K562 (cell line): ENCODE measurements at regions of chr5 and their contacts with region 1.

Region 1: DNA sequence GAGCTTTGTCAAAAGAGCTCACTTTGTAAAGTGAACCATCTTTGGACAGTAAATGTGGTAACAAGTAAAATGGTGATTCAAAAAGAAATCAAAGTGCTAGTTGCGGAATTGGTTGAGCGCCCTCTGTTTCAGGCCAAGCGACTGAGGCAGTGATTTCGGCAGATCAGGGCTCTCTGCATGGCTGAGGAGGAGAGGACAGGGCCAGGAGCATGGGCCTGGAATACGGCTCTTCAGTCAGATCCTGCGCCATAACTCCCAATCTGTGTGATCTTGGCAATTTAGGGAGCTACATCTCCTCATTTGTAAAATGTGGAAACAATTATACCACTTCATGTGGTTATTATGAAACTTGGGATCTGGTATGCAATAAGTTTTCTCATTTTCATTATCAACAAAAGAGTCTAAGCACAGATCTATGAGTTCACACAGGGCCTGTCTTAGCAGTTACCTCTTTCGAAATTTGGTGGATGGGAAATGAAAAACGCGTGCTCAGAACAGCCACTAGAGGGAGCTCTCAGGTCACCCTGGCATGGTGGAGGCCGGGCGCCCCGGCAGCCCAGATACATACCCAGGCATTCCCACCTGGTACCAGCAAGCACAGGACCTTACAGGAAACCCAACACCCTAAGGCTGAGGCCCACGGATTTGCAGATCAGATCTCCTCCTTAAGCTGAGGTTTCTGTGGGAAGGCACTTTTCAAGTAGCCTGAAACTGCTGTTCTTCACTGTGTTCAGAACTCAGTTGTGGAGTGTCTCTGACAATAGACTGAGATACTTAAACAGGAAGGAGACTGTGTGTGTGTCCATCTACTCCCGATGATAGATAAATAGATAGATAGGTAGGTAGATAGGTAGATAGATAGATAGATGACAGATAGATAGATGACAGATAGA is 303.7 kb downstream of the RAB3C start:
- DNase-seq: peak; percentile 48 to 72 (median 66)
- ATAC-seq: peak; percentile 83
- H3K4me3 ChIP-seq: no peak overlapping the region
- H3K27ac ChIP-seq: no peak overlapping the region
- H3K4me1 ChIP-seq: no peaks in the 10 kb centered on the region
- H3K27me3 ChIP-seq: peaks cover 0 to 5% of the 10 kb centered on the region in 2 experiments; a peak in 1 of 5 replicates
- CTCF ChIP-seq: peak; percentile 63 to 84 (median 83)
- EP300 ChIP-seq: no peak
- POLR2A ChIP-seq: no peak
- RAD21 ChIP-seq: peak in 1 of 2 experiments; percentile 59; a peak in 3 of 4 replicates

Region 2: GRCh38 chr5:59007460-59008063 is 121.0 kb after region 1 on chr5:
- CTCF ChIA-PET with region 1: interaction called, 11 read pairs
- POLR2A ChIA-PET with region 1: interaction called, 3 read pairs
- in situ Hi-C with region 1: no loop called
- intact Hi-C with region 1: loop called (anchors 2 kb)
- DNase-seq: peak in 2 of 4 experiments; percentile 5 to 8
- ATAC-seq: no peak
- H3K4me3 ChIP-seq: no peak overlapping the region
- H3K27ac ChIP-seq: no peak overlapping the region
- H3K4me1 ChIP-seq: no peaks in the 10 kb centered on the region
- H3K27me3 ChIP-seq: no peaks in the 10 kb centered on the region
- CTCF ChIP-seq: peak in 1 of 3 experiments; percentile 59; a peak in 2 of 6 replicates
- EP300 ChIP-seq: no peak
- POLR2A ChIP-seq: no peak
- RAD21 ChIP-seq: peak; percentile 43 to 54; a peak in 3 of 4 replicates

Region 3: DNA sequence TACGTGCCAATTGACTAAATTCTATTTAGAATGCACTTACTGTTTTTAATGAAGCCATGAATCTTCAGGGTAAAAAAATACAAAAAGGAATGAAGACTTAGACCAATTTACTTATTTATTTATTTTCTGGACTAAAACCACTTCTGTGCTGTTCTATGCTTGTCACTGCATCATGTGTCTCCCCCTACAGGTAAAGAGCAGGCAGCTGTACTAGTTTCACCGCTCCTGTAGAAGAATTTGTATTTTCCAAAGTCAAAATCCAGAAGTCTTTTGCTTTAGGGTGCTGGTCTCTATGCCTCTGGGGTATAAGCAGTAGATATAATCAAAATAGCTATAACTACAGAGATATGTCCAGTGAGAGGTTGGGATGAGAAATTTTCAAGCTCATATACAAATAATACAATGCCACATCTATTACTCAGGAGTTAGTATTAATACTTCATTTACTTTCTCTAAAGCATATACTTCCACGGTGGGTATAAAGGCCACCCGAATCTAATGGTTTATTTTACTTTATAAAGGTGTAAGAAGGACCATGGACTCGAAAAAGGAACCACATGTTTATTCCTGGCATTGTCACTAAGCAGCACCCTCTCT is 287.8 kb after region 1 on chr5:
- CTCF ChIA-PET with region 1: interaction called, 11 read pairs
- POLR2A ChIA-PET with region 1: no interaction called
- in situ Hi-C with region 1: no loop called
- intact Hi-C with region 1: loop called (anchors 2 kb)
- DNase-seq: peak in 2 of 4 experiments; percentile 20 to 44
- ATAC-seq: peak; percentile 82
- H3K4me3 ChIP-seq: no peak overlapping the region
- H3K27ac ChIP-seq: no peak overlapping the region
- H3K4me1 ChIP-seq: no peaks in the 10 kb centered on the region
- H3K27me3 ChIP-seq: no peaks in the 10 kb centered on the region
- CTCF ChIP-seq: peak; percentile 48 to 70 (median 60)
- EP300 ChIP-seq: no peak
- POLR2A ChIP-seq: no peak
- RAD21 ChIP-seq: peak; percentile 52 to 54

Region 4: DNA sequence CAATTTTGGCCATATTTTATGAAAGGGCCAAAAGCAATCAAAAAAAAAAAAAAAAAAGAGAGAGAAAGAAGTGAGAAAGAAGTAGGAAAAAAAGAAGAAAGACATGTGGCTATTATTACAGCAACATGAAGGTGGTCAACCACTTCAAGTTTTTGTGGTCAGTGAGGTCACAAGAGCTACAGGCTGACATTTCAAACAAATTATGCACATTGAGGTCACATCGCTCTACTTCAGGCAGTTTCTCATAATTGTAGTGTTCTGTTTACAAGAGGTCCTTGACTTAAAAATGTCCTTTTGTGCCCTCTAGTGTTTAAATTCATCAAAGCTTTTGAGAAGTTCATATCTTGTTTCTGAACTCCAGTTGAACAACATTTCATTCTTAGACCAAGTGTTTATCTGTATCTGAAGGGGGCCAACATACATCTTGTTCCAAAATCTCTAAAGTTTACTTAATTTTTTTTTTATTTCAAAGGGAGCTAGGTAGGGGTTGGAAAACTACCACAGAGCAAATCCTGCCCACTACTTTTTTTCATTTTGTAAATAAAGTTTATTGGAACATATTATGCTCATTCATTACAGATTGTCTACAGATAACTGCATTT is 493.9 kb after region 1 on chr5:
- CTCF ChIA-PET with region 1: no interaction called
- POLR2A ChIA-PET with region 1: no interaction called
- in situ Hi-C with region 1: no loop called
- intact Hi-C with region 1: loop called (anchors 10 kb)
- DNase-seq: peak in 2 of 4 experiments; percentile 7 to 13
- ATAC-seq: no peak; the same call in 2 of the 3 replicates
- H3K4me3 ChIP-seq: no peak overlapping the region
- H3K27ac ChIP-seq: no peak overlapping the region
- H3K4me1 ChIP-seq: no peaks in the 10 kb centered on the region
- H3K27me3 ChIP-seq: no peaks in the 10 kb centered on the region
- CTCF ChIP-seq: peak in 1 of 3 experiments; percentile 32; a peak in 2 of 6 replicates
- EP300 ChIP-seq: no peak
- POLR2A ChIP-seq: no peak
- RAD21 ChIP-seq: peak in 1 of 2 experiments; percentile 46; a peak in 3 of 4 replicates

Region 5: DNA sequence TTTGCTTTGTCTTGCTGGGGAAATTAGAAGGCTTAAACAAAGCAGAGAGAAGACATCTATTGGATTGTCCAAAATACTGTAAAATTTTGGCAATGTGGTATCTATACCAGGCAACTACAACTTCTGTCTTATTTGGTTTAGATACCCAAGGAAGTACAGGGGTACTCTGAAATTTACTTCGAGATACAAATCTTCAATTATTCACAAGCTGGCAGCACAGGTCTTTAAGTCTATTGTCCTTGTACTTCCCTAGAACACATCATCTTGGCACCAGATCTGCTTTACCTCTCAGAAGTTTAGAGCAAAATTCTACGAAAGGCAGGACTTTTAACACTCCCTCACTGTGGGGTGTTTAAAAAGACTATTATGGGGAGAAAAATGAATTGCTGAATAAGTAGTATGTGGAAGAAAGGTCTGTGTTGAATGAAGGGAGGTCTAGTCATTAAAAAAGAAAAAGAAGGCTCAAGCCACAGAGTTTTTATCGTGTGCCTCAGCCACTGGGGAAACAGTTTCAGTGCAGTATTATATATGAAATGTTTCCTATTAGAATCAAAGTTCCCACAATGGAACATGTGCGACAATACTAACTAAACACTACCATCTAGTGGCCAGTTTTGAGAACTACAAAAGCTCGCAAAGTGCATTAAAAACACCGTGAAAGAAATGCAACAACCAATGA is 913.2 kb after region 1 on chr5:
- CTCF ChIA-PET with region 1: no interaction called
- POLR2A ChIA-PET with region 1: no interaction called
- in situ Hi-C with region 1: loop called (anchors 25 kb)
- intact Hi-C with region 1: loop called (anchors 10 kb)
- DNase-seq: peak; percentile 22 to 50 (median 24)
- ATAC-seq: peak; percentile 76
- H3K4me3 ChIP-seq: no peak overlapping the region
- H3K27ac ChIP-seq: no peak overlapping the region
- H3K4me1 ChIP-seq: no peaks in the 10 kb centered on the region
- H3K27me3 ChIP-seq: no peaks in the 10 kb centered on the region
- CTCF ChIP-seq: peak; percentile 42 to 78 (median 51); a peak in 4 of 6 replicates
- EP300 ChIP-seq: no peak
- POLR2A ChIP-seq: no peak
- RAD21 ChIP-seq: peak; percentile 68 to 78

Region 6: DNA sequence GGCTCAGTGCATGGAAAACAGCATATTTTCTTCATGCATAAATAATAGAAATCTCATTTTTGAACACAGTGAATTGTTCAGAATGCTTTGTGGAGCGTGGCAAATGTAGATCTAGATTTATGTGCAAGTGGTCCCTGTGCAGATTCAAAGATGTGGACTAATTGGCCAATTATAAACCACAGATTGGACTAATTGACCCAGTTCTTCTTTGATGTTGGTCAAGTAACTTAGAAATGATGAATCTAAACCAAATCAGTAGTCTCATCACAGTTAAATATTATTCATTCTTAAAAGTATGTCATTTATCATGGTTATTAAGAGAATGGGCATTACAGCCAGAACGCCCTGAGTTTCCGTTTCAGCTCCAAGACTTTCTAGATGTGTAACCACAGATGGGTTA is 1018.6 kb after region 1 on chr5:
- CTCF ChIA-PET with region 1: no interaction called
- POLR2A ChIA-PET with region 1: no interaction called
- in situ Hi-C with region 1: no loop called
- intact Hi-C with region 1: no loop called
- DNase-seq: no peak
- ATAC-seq: no peak
- H3K4me3 ChIP-seq: no peak overlapping the region
- H3K27ac ChIP-seq: no peak overlapping the region
- H3K4me1 ChIP-seq: no peaks in the 10 kb centered on the region
- H3K27me3 ChIP-seq: no peaks in the 10 kb centered on the region
- CTCF ChIP-seq: no peak
- EP300 ChIP-seq: no peak
- POLR2A ChIP-seq: no peak
- RAD21 ChIP-seq: no peak